Caco-2 (cell line): ENCODE measurements at regions of chr15 and their contacts with region 1.

Region 1: GRCh38 chr15:50315814-50316630 is 39.0 kb downstream of the GABPB1 start:
- DNase-seq: peak in 1 of 2 experiments; percentile 29
- H3K4me3 ChIP-seq: no peak overlapping the region
- H3K4me3 Mint-ChIP-seq: no peak overlapping the region
- H3K27ac Mint-ChIP-seq: no peak overlapping the region
- H3K4me1 ChIP-seq: no peaks in the 10 kb centered on the region
- H3K4me1 Mint-ChIP-seq: no peaks in the 10 kb centered on the region
- H3K27me3 ChIP-seq: no peaks in the 10 kb centered on the region
- H3K27me3 Mint-ChIP-seq: no peaks in the 10 kb centered on the region
- CTCF ChIP-seq: peak; percentile 47 to 77

Region 2: GRCh38 chr15:50182219-50183013 is 133.6 kb before region 1 on chr15:
- CTCF ChIA-PET with region 1: interaction called, 20 read pairs
- POLR2A ChIA-PET with region 1: interaction called, 9 read pairs
- intact Hi-C with region 1: loop called (anchors 2 kb)
- DNase-seq: peak; percentile 73 to 84
- H3K4me3 ChIP-seq: peak overlapping the region; percentile 83
- H3K4me3 Mint-ChIP-seq: peak overlapping the region; percentile 88
- H3K27ac Mint-ChIP-seq: peak overlapping the region; percentile 51
- H3K4me1 ChIP-seq: peaks cover 5% of the 10 kb centered on the region; the same call in 1 of the 2 replicates
- H3K4me1 Mint-ChIP-seq: peaks cover 11% of the 10 kb centered on the region
- H3K27me3 ChIP-seq: no peaks in the 10 kb centered on the region
- H3K27me3 Mint-ChIP-seq: no peaks in the 10 kb centered on the region
- CTCF ChIP-seq: no peak

Region 3: DNA sequence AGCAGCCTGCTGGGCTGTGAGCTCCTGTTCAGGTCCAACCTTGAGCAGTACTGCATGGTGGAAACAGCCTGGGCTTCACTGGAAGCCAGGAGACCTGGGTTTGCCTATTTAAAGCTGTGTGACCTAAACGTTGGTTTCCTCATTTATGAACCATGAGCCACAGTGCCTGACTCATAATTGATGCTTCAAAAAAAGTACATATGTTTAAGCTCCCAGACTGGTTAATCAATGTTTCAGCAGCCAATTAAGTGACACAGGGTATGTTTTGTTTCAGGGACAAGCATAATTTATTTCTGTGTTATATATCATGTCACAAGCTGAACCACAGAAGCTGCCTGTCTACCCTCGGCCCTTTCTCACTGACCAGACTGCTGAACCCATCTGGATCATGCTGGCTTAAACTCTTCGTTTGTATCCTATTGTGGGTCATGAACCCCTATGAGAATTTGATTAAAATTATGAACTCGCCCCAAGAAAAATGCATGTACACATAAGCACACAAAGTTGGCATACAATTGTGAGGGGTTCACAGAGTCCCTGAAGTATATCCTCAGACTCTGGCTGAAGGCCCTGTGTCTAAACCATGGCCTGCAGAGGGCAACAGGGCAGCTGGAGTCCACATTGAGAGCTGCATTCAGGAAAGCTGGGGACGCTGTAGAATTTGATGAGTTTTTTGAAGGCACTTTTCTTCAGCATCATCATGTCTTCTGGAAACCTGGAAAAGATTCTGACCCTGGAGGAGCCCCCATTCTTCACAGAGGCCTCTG is 74.2 kb before region 1 on chr15:
- CTCF ChIA-PET with region 1: interaction called, 11 read pairs
- POLR2A ChIA-PET with region 1: interaction called, 4 read pairs
- intact Hi-C with region 1: no loop called
- DNase-seq: no peak
- H3K4me3 ChIP-seq: no peak overlapping the region
- H3K4me3 Mint-ChIP-seq: no peak overlapping the region
- H3K27ac Mint-ChIP-seq: no peak overlapping the region
- H3K4me1 ChIP-seq: no peaks in the 10 kb centered on the region
- H3K4me1 Mint-ChIP-seq: no peaks in the 10 kb centered on the region
- H3K27me3 ChIP-seq: no peaks in the 10 kb centered on the region
- H3K27me3 Mint-ChIP-seq: no peaks in the 10 kb centered on the region
- CTCF ChIP-seq: peak in 1 of 2 experiments; percentile 37